ENCODE measurements at regions of chr4 and their contacts with region 1.

Region 1: GRCh38 chr4:39353478-39354253 is 12.5 kb downstream of the RFC1 start:
- DNase-seq: peak in 3 of 14 experiments; percentile 71 to 81 (median 72)
- ATAC-seq: peak; percentile 77
- H3K4me3 ChIP-seq: peak overlapping the region; percentile 53
- H3K4me3 Mint-ChIP-seq: peak overlapping the region; percentile 88
- H3K27ac ChIP-seq: peak overlapping the region; percentile 75 to 88
- H3K27ac Mint-ChIP-seq: peak overlapping the region; percentile 97
- H3K4me1 ChIP-seq: peaks cover 20% of the 10 kb centered on the region
- H3K4me1 Mint-ChIP-seq: peaks cover 67% of the 10 kb centered on the region
- H3K27me3 ChIP-seq: no peaks in the 10 kb centered on the region
- H3K27me3 Mint-ChIP-seq: no peaks in the 10 kb centered on the region
- CTCF ChIP-seq: no peak

Region 2: GRCh38 chr4:39331191-39331590 is 22.5 kb before region 1 on chr4:
- CTCF ChIA-PET with region 1: no interaction called
- POLR2A ChIA-PET with region 1: no interaction called
- intact Hi-C with region 1: no loop called
- DNase-seq: no peak
- ATAC-seq: no peak
- H3K4me3 ChIP-seq: no peak overlapping the region
- H3K4me3 Mint-ChIP-seq: no peak overlapping the region
- H3K27ac ChIP-seq: no peak overlapping the region
- H3K27ac Mint-ChIP-seq: no peak overlapping the region
- H3K4me1 ChIP-seq: no peaks in the 10 kb centered on the region
- H3K4me1 Mint-ChIP-seq: peaks cover 43% of the 10 kb centered on the region
- H3K27me3 ChIP-seq: no peaks in the 10 kb centered on the region
- H3K27me3 Mint-ChIP-seq: no peaks in the 10 kb centered on the region
- CTCF ChIP-seq: no peak

Region 3: DNA sequence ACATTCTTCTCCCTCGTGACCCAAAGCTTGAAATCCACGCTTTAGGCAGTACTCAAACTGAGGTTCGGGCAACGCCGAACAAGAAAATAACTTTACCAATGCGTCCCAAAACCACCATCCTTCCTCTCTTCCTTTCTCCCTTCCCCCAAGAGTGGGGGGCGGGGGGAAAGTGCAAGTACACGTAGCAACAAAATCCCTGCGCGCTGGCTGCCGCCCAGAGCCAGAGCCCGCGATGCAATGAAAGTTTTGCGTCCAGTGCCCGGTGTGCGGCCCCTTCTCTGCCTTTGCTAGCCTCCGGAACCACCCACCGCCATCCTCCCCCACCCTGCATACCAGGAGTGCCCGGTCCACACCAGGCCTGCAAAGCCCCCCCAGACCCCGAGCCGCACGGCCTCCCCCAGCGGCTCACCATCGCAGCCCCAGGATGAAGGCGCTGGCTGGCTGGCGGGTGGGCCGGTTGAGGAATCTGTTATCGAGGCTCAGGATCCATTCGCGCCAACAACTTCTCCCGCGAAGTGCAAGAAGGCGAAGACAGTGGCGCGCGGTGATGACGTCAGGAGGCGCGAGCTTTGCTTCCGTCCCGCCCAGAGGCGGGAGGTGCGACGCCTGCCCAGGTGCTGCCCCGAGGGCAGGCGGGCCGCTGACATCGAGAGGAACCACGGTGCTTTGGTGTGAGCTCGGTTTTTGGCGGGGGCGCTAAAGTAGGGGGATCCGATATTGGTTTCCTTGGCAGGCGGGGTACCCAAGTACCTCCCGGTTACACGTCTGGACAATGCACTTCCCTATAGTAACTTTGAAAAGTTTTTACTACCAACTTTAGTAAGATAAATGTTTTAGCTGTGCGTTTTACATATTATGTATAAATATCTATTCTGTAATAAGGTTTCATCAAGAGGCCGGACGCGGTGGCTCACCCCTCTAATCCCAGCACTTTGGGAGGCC is 12.4 kb after region 1 on chr4 and contains the start of gene RFC1:
- CTCF ChIA-PET with region 1: interaction called, 9 read pairs
- POLR2A ChIA-PET with region 1: interaction called, 40 read pairs
- intact Hi-C with region 1: loop called (anchors 2 kb)
- DNase-seq: peak; percentile 85 to 97 (median 91)
- ATAC-seq: peak; percentile 95
- H3K4me3 ChIP-seq: peak within 1 kb of the TSS; percentile 98
- H3K4me3 Mint-ChIP-seq: peak within 1 kb of the TSS; percentile 93
- H3K27ac ChIP-seq: peak within 1 kb of the TSS; percentile 49 to 81
- H3K27ac Mint-ChIP-seq: peak within 1 kb of the TSS; percentile 91
- H3K4me1 ChIP-seq: peaks cover 30% of the 10 kb centered on the region
- H3K4me1 Mint-ChIP-seq: peaks cover 37% of the 10 kb centered on the region
- H3K27me3 ChIP-seq: no peaks in the 10 kb centered on the region
- H3K27me3 Mint-ChIP-seq: no peaks in the 10 kb centered on the region
- CTCF ChIP-seq: no peak
- total RNA-seq, gene RFC1: 97.0 to 104 TPM

Region 4: GRCh38 chr4:39446751-39447573 is 93.3 kb after region 1 on chr4:
- CTCF ChIA-PET with region 1: no interaction called
- POLR2A ChIA-PET with region 1: no interaction called
- intact Hi-C with region 1: loop called in 1 of 2 experiments (anchors 5 kb)
- DNase-seq: peak in 13 of 14 experiments; percentile 4 to 82 (median 34)
- ATAC-seq: peak; percentile 86
- H3K4me3 ChIP-seq: peak overlapping the region; percentile 53
- H3K4me3 Mint-ChIP-seq: peak overlapping the region; percentile 76
- H3K27ac ChIP-seq: no peak overlapping the region
- H3K27ac Mint-ChIP-seq: peak overlapping the region; percentile 63
- H3K4me1 ChIP-seq: peaks cover 12% of the 10 kb centered on the region
- H3K4me1 Mint-ChIP-seq: peaks cover 9% of the 10 kb centered on the region
- H3K27me3 ChIP-seq: no peaks in the 10 kb centered on the region
- H3K27me3 Mint-ChIP-seq: no peaks in the 10 kb centered on the region
- CTCF ChIP-seq: no peak

Region 5: GRCh38 chr4:39495454-39496213 is 142.0 kb after region 1 on chr4:
- CTCF ChIA-PET with region 1: no interaction called
- POLR2A ChIA-PET with region 1: no interaction called
- intact Hi-C with region 1: no loop called
- DNase-seq: no peak
- ATAC-seq: no peak
- H3K4me3 ChIP-seq: no peak overlapping the region
- H3K4me3 Mint-ChIP-seq: no peak overlapping the region
- H3K27ac ChIP-seq: no peak overlapping the region
- H3K27ac Mint-ChIP-seq: no peak overlapping the region
- H3K4me1 ChIP-seq: no peaks in the 10 kb centered on the region
- H3K4me1 Mint-ChIP-seq: no peaks in the 10 kb centered on the region
- H3K27me3 ChIP-seq: no peaks in the 10 kb centered on the region
- H3K27me3 Mint-ChIP-seq: no peaks in the 10 kb centered on the region
- CTCF ChIP-seq: no peak